Dendritic cell treated with granulocyte-macrophage colony-stimulating factor and Interleukin-4, amounts not matched to agents 40 ng/mL and 50 ng/mL, for 4 days (primary cell): ENCODE measurements at regions of chr13 and their contacts with region 1.

Region 1: GRCh38 chr13:77026818-77027585 is at the start of gene FBXL3:
- H3K4me3 Mint-ChIP-seq: peak within 1 kb of the TSS; percentile 93
- H3K27ac Mint-ChIP-seq: peak within 1 kb of the TSS; percentile 91
- H3K4me1 Mint-ChIP-seq: peaks cover 50% of the 10 kb centered on the region
- H3K27me3 Mint-ChIP-seq: no peaks in the 10 kb centered on the region

Region 2: DNA sequence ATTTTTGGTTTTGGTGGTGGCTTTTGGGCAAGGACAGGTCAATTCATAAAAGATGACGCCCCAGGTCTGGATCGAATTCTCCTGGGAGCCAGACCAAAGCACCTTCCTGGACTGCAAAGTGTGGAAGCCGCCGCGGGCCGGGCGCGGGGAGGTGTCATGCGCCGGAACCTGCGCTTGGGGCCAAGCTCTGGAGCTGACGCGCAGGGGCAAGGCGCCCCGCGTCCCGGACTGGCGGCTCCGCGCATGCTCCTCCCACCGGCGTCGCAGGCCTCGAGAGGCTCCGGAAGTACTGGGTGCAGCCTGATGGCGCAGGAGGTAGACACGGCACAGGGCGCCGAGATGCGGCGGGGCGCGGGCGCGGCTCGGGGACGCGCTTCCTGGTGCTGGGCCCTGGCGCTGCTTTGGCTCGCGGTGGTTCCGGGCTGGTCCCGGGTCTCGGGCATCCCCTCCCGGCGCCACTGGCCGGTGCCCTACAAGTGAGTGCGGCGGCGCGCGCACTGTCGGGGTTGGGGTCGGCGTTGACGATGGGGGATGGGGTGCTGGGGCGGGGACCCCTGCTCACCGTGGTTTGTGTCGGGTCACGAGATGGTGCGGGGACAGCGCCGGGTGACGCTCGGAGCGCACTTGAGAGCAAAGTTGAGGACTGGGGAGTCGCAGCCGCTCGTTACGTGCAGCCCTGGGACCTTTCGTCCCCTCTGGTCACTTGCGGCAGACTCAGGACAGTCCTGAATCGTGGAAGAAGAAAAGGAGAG is 35.0 kb before region 1 on chr13 and contains the start of gene CLN5:
- intact Hi-C with region 1: loop called (anchors 2 kb)
- H3K4me3 Mint-ChIP-seq: peak within 1 kb of the TSS; percentile 99
- H3K27ac Mint-ChIP-seq: peak within 1 kb of the TSS; percentile 99
- H3K4me1 Mint-ChIP-seq: peaks cover 24% of the 10 kb centered on the region
- H3K27me3 Mint-ChIP-seq: no peaks in the 10 kb centered on the region

Region 3: DNA sequence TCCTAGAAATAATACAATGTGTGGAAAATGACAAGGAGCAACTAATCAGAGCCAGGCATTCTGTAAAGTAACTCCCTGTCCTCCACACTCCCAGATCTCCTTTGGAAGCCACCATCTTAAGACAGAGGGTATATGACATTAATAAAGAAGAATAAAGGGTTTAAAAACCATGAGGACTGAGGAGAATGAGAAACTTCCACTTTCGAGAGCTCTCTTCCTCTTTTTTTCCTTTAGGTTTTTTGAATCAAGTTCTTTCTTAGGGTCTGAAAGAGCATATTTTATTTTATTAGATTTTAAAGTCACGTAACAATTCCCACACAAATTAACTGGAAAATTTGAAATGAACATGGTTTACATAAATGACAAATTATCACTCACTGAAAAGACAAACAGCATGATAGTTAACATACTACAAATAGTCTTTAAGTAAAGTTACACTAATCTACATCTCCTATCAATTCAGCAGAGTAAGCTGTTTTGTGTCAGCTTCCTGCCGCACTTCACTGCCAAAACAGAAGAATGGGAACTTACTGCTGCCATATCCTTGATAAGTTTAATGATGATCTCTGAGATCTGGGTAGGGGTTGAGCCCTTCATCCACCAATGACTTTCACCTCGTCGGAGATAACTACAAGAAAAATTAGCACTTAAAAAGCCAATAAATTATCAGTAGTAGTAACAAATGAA is 38.6 kb after region 1 on chr13:
- intact Hi-C with region 1: loop called (anchors 5 kb)
- H3K4me3 Mint-ChIP-seq: peak overlapping the region; percentile 32
- H3K27ac Mint-ChIP-seq: peak overlapping the region; percentile 87
- H3K4me1 Mint-ChIP-seq: peaks cover 21% of the 10 kb centered on the region
- H3K27me3 Mint-ChIP-seq: no peaks in the 10 kb centered on the region